ENCODE measurements at regions of chr13 and their contacts with region 1.

Region 1: DNA sequence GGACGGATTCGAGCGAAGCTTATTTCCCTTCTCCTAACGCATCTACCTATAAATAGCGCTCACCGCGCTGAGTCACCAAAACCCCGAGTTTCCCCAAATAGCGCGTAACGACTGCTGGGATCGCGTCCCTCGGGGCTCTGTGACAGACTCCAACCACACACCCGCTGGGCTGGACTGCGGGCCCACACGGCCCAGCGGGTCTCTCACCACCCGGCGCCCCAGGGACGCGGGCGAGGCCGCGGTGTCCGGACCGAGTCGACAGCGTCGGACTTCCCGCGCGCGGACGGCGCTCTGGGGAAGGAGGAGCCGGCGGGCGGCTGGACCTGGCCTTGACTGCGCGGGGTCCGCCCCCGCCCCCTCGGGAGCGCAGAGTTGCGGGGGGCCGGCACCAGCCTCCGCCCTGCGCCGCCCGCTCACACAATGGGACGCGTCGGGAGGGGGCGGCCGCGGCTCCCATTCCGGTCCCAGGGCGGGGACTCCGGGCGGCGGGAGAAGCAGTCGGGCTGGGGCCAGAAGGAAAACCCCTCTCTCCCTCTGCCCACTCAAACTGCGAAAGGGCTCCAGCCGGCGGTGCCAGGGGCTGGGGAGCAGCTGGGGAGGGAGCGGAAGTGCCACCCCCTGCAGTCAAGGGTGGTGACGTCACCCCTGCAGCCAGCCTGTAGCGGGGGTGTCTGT is 108.8 kb downstream of the KCNRG start:
- DNase-seq: peak; percentile 94 to 99 (median 96)
- H3K4me3 ChIP-seq: peak overlapping the region; percentile 85 to 100 (median 97)
- H3K4me3 Mint-ChIP-seq: peak overlapping the region; percentile 86 to 95
- H3K27ac ChIP-seq: peak overlapping the region; percentile 99 to 100
- H3K27ac Mint-ChIP-seq: peak overlapping the region; percentile 94 to 99 (median 98)
- H3K4me1 ChIP-seq: peaks cover 59 to 68% of the 10 kb centered on the region in 2 donors
- H3K4me1 Mint-ChIP-seq: peaks cover 61% of the 10 kb centered on the region
- H3K27me3 ChIP-seq: peaks cover 0 to 13% of the 10 kb centered on the region in 2 donors
- H3K27me3 Mint-ChIP-seq: peaks cover 5 to 14% (median 13%) of the 10 kb centered on the region in 3 donors
- CTCF ChIP-seq: no peak

Region 2: GRCh38 chr13:50015258-50015657 is 108.7 kb before region 1 on chr13 and contains the start of gene KCNRG:
- intact Hi-C with region 1: no loop called
- DNase-seq: no peak
- H3K4me3 ChIP-seq: no peak within 1 kb of the TSS
- H3K4me3 Mint-ChIP-seq: no peak within 1 kb of the TSS
- H3K27ac ChIP-seq: peak within 1 kb of the TSS in 1 of 2 donors; percentile 46
- H3K27ac Mint-ChIP-seq: peak within 1 kb of the TSS in 6 of 7 donors; percentile 27 to 65 (median 48)
- H3K4me1 ChIP-seq: no peaks in the 10 kb centered on the region
- H3K4me1 Mint-ChIP-seq: no peaks in the 10 kb centered on the region
- H3K27me3 ChIP-seq: no peaks in the 10 kb centered on the region
- H3K27me3 Mint-ChIP-seq: no peaks in the 10 kb centered on the region
- CTCF ChIP-seq: no peak
- polyA plus RNA-seq, gene KCNRG: 0.15 to 0.29 TPM in 2 of 3 donors, not detected in the other

Region 3: GRCh38 chr13:50081679-50082425 is 42.1 kb before region 1 on chr13:
- intact Hi-C with region 1: loop called (anchors 2 to 5 kb)
- DNase-seq: peak; percentile 97 to 99 (median 97)
- H3K4me3 ChIP-seq: peak overlapping the region; percentile 79 to 94 (median 91)
- H3K4me3 Mint-ChIP-seq: peak overlapping the region; percentile 99 to 100
- H3K27ac ChIP-seq: peak overlapping the region; percentile 80 to 85
- H3K27ac Mint-ChIP-seq: peak overlapping the region; percentile 90 to 98 (median 95)
- H3K4me1 ChIP-seq: peaks cover 49 to 74% of the 10 kb centered on the region in 2 donors
- H3K4me1 Mint-ChIP-seq: peaks cover 50% of the 10 kb centered on the region
- H3K27me3 ChIP-seq: no peaks in the 10 kb centered on the region
- H3K27me3 Mint-ChIP-seq: no peaks in the 10 kb centered on the region
- CTCF ChIP-seq: no peak

Region 4: GRCh38 chr13:50208826-50209335 is 84.9 kb after region 1 on chr13:
- intact Hi-C with region 1: loop called in 1 of 2 experiments (anchors 5 kb)
- DNase-seq: peak; percentile 78 to 89 (median 86)
- H3K4me3 ChIP-seq: peak overlapping the region; percentile 53 to 80 (median 57)
- H3K4me3 Mint-ChIP-seq: peak overlapping the region; percentile 89 to 98
- H3K27ac ChIP-seq: peak overlapping the region; percentile 93 to 94
- H3K27ac Mint-ChIP-seq: peak overlapping the region; percentile 95 to 100 (median 98)
- H3K4me1 ChIP-seq: peaks cover 25 to 31% of the 10 kb centered on the region in 2 donors
- H3K4me1 Mint-ChIP-seq: peaks cover 33% of the 10 kb centered on the region
- H3K27me3 ChIP-seq: no peaks in the 10 kb centered on the region
- H3K27me3 Mint-ChIP-seq: no peaks in the 10 kb centered on the region
- CTCF ChIP-seq: no peak

Region 5: DNA sequence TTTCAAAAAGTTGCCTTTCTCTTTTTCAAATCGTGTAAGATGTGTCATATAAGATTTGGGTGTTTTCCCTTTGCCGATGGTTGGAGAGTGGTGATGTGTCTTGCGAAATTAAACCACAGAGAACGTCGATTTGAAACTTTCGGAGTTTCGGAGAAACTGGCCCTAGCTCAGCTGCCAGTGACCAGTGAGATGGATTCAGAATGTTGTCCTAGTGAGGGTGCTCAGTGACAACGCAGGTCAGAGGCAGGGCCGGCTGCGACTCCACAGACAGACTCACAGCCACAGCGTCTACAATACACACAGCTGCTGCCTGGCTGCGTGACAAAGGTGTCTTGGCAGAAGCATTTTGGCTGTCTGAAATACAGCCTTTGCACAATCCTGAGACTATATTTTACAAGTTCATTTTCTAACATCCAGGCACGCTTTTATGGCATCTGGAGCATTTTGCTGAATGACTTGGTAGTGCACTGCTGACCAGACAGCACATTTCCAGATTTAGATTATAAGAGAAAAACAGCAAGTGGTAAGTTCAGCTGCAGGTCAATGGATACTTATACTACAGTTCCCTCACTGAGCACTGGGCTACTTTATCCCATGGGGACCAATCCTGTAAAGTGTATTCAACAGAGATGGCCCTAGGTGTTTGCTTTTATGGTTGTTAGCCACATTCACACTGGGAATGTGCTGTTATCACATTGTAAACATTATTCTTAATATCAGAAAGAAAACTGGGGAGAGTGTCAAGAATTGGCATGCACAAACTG is 98.8 kb after region 1 on chr13:
- intact Hi-C with region 1: loop called in 1 of 2 experiments (anchors 5 kb)
- DNase-seq: peak; percentile 94 to 99 (median 96)
- H3K4me3 ChIP-seq: peak overlapping the region in 1 of 3 experiments; percentile 13
- H3K4me3 Mint-ChIP-seq: peak overlapping the region; percentile 58 to 75
- H3K27ac ChIP-seq: peak overlapping the region; percentile 93 to 98
- H3K27ac Mint-ChIP-seq: peak overlapping the region; percentile 95 to 99 (median 98)
- H3K4me1 ChIP-seq: peaks cover 51 to 62% of the 10 kb centered on the region in 2 donors
- H3K4me1 Mint-ChIP-seq: peaks cover 69% of the 10 kb centered on the region
- H3K27me3 ChIP-seq: no peaks in the 10 kb centered on the region
- H3K27me3 Mint-ChIP-seq: no peaks in the 10 kb centered on the region
- CTCF ChIP-seq: no peak

Region 6: DNA sequence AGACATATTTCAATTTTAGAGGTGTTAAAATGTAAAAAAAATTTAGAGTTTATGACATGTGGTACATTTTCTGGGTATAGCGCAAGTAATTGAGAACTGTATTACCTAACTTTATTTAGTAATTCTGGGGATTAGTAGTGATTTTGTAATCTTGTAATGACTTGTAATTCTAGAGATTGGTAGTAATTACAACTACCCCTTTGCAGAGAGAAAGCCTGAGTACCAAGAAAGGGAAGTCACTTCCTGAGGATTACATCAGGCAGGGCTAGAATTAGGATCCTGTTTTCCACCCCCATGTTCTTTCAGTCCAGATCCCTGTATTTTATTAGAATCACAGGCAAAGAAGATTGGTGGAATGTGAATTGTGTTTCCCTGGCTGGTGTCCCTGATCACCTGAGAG is 166.2 kb after region 1 on chr13:
- intact Hi-C with region 1: loop called in 1 of 2 experiments (anchors 10 kb)
- DNase-seq: peak; percentile 73 to 92 (median 90)
- H3K4me3 ChIP-seq: peak overlapping the region in 1 of 3 experiments; percentile 37
- H3K4me3 Mint-ChIP-seq: no peak overlapping the region
- H3K27ac ChIP-seq: peak overlapping the region; percentile 57 to 85
- H3K27ac Mint-ChIP-seq: peak overlapping the region; percentile 78 to 96 (median 93)
- H3K4me1 ChIP-seq: peaks cover 53 to 66% of the 10 kb centered on the region in 2 donors
- H3K4me1 Mint-ChIP-seq: peaks cover 64% of the 10 kb centered on the region
- H3K27me3 ChIP-seq: no peaks in the 10 kb centered on the region
- H3K27me3 Mint-ChIP-seq: no peaks in the 10 kb centered on the region
- CTCF ChIP-seq: no peak

Region 7: GRCh38 chr13:50635504-50635903 is 511.5 kb after region 1 on chr13:
- intact Hi-C with region 1: loop called in 1 of 2 experiments (anchors 10 kb)
- DNase-seq: peak; percentile 98 to 100 (median 99)
- H3K4me3 ChIP-seq: no peak overlapping the region
- H3K4me3 Mint-ChIP-seq: peak overlapping the region in 1 of 2 donors; percentile 46
- H3K27ac ChIP-seq: peak overlapping the region; percentile 100
- H3K27ac Mint-ChIP-seq: peak overlapping the region; percentile 95 to 100 (median 99)
- H3K4me1 ChIP-seq: peaks cover 48 to 60% of the 10 kb centered on the region in 2 donors
- H3K4me1 Mint-ChIP-seq: peaks cover 49% of the 10 kb centered on the region
- H3K27me3 ChIP-seq: no peaks in the 10 kb centered on the region
- H3K27me3 Mint-ChIP-seq: no peaks in the 10 kb centered on the region
- CTCF ChIP-seq: no peak